ENCODE measurements at regions of chr7 and their contacts with region 1.

Region 1: DNA sequence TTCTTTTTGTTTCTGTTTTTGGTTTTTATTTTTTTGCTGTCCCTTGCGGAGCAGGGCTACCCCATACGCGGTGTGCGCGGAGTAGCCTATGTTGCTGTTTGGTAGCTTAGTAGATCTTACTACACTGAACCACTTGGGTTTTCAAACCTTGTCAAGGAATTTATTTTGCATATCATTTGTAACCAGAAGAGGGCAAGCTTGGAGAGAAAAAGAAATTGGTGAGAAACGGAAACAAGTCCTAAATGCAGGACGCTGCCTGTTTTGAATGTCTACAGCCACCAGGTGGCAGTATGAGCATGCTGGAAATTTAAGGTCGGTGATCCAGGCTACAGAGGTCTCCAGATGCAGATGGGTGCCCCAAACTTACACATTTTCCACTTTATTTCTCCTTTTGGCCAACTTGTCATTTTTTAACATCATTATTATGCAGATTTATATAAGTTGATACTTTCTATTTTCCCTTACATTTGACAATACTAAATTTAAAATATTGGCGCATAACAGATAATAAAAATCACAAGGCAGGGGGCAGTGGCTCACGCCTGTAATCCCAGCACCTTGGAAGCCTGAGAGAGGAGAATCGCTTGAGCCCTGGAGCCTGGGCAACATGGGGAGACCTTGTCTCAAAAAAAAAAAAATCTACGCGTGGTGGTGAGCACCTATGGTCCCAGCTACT is 15.3 kb upstream of the TRA2A start:
- DNase-seq: peak; percentile 86
- H3K4me3 Mint-ChIP-seq: no peak overlapping the region
- H3K27ac Mint-ChIP-seq: no peak overlapping the region
- H3K4me1 Mint-ChIP-seq: peaks cover 2% of the 10 kb centered on the region
- H3K27me3 Mint-ChIP-seq: no peaks in the 10 kb centered on the region

Region 2: DNA sequence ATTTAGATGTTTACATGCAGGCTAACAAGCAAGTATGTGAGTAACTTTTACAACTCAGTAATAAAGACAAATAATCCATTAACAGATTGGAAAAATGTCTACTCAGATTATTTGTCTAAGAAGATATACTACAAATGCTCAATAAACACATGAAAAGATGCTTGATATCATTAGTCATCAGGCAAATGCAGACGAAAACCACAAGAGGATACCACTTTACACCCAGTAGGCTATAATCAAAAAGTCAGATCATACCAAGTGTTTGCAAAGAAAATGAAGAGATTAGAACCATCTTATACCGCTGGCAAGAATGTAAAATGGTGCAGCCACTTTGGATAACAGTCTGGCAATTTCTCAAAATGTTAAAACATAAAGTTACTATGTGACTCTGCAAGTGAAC is 163.8 kb before region 1 on chr7:
- CTCF ChIA-PET with region 1: no interaction called
- POLR2A ChIA-PET with region 1: no interaction called
- intact Hi-C with region 1: no loop called
- DNase-seq: no peak
- H3K4me3 Mint-ChIP-seq: no peak overlapping the region
- H3K27ac Mint-ChIP-seq: no peak overlapping the region
- H3K4me1 Mint-ChIP-seq: peaks cover 6% of the 10 kb centered on the region
- H3K27me3 Mint-ChIP-seq: peaks cover 13% of the 10 kb centered on the region

Region 3: DNA sequence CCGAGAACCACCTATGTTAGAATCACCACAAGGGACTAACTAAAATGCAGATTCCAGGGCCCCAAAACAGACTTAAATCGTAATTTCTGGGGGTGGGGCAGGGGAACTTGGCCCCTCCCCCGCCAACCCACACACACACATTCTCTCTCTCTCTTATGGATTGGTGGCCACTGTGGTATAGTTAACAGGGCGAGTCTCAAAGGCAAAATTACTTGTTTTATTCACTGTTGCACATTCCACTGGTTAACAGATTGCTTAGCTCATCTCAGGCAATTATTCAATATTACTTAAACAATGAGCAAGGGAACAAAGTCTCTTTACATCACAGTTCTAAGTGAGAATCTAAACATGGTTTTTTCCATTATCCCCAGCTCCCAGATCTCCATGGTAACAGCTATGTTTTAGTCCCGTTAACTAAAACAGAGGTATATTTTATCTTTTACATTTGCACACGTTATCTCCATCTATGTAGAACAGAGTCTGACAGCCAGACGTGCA is 115.3 kb before region 1 on chr7:
- CTCF ChIA-PET with region 1: no interaction called
- POLR2A ChIA-PET with region 1: no interaction called
- intact Hi-C with region 1: loop called (anchors 2 kb)
- DNase-seq: no peak
- H3K4me3 Mint-ChIP-seq: no peak overlapping the region
- H3K27ac Mint-ChIP-seq: no peak overlapping the region
- H3K4me1 Mint-ChIP-seq: no peaks in the 10 kb centered on the region
- H3K27me3 Mint-ChIP-seq: peaks cover 25% of the 10 kb centered on the region

Region 4: DNA sequence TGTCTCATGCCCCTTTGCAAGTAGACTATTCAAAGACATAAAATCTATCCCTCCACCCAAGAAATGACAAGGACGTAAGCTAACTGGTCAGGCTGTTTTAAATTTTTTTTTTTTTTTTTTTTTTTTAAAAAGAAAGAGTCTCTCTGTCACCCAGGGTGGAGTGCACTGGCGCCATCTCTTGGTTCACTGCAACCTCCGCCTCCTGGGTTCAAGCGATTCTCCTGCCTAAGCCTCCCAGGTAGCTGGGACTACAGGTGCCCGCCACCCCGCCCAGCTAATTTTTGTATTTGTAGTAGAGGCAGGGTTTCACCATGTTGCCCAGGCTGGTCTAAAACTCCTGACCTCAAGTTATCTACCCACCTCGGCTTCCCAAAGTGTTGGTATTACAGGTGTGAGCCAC is 26.5 kb before region 1 on chr7:
- CTCF ChIA-PET with region 1: interaction called, 11 read pairs
- POLR2A ChIA-PET with region 1: no interaction called
- intact Hi-C with region 1: no loop called
- DNase-seq: peak; percentile 38
- H3K4me3 Mint-ChIP-seq: no peak overlapping the region
- H3K27ac Mint-ChIP-seq: no peak overlapping the region
- H3K4me1 Mint-ChIP-seq: peaks cover 46% of the 10 kb centered on the region
- H3K27me3 Mint-ChIP-seq: no peaks in the 10 kb centered on the region

Region 5: GRCh38 chr7:23570592-23571200 is 23.7 kb after region 1 on chr7:
- CTCF ChIA-PET with region 1: interaction called, 15 read pairs
- POLR2A ChIA-PET with region 1: no interaction called
- intact Hi-C with region 1: loop called (anchors 1 kb)
- DNase-seq: peak; percentile 82
- H3K4me3 Mint-ChIP-seq: no peak overlapping the region
- H3K27ac Mint-ChIP-seq: no peak overlapping the region
- H3K4me1 Mint-ChIP-seq: no peaks in the 10 kb centered on the region
- H3K27me3 Mint-ChIP-seq: peaks cover 8% of the 10 kb centered on the region

Region 6: GRCh38 chr7:23654508-23654907 is 107.5 kb after region 1 on chr7:
- CTCF ChIA-PET with region 1: no interaction called
- POLR2A ChIA-PET with region 1: no interaction called
- intact Hi-C with region 1: no loop called
- DNase-seq: no peak
- H3K4me3 Mint-ChIP-seq: no peak overlapping the region
- H3K27ac Mint-ChIP-seq: no peak overlapping the region
- H3K4me1 Mint-ChIP-seq: no peaks in the 10 kb centered on the region
- H3K27me3 Mint-ChIP-seq: no peaks in the 10 kb centered on the region

Region 7: GRCh38 chr7:23696916-23697441 is 149.9 kb after region 1 on chr7:
- CTCF ChIA-PET with region 1: interaction called, 12 read pairs
- POLR2A ChIA-PET with region 1: no interaction called
- intact Hi-C with region 1: loop called (anchors 1 kb)
- DNase-seq: peak; percentile 70
- H3K4me3 Mint-ChIP-seq: no peak overlapping the region
- H3K27ac Mint-ChIP-seq: no peak overlapping the region
- H3K4me1 Mint-ChIP-seq: no peaks in the 10 kb centered on the region
- H3K27me3 Mint-ChIP-seq: no peaks in the 10 kb centered on the region

Region 8: GRCh38 chr7:23712368-23713284 is 165.6 kb after region 1 on chr7:
- CTCF ChIA-PET with region 1: interaction called, 40 read pairs
- POLR2A ChIA-PET with region 1: no interaction called
- intact Hi-C with region 1: loop called (anchors 1 kb)
- DNase-seq: no peak
- H3K4me3 Mint-ChIP-seq: no peak overlapping the region
- H3K27ac Mint-ChIP-seq: peak overlapping the region; percentile 5
- H3K4me1 Mint-ChIP-seq: no peaks in the 10 kb centered on the region
- H3K27me3 Mint-ChIP-seq: peaks cover 2% of the 10 kb centered on the region

Measured in activated CD4-positive, alpha-beta memory T cell treated with anti-CD3 and anti-CD28 coated beads for 36 hours (primary cell).